OCI-LY7 (cell line): ENCODE measurements at regions of chr20 and their contacts with region 1.

Region 1: GRCh38 chr20:47508278-47508677 is 6.6 kb downstream of the NCOA3 start:
- DNase-seq: peak; percentile 42
- H3K4me3 ChIP-seq: peak overlapping the region; percentile 27
- H3K27ac ChIP-seq: peak overlapping the region; percentile 54
- H3K4me1 ChIP-seq: peaks cover 65% of the 10 kb centered on the region
- CTCF ChIP-seq: no peak

Region 2: DNA sequence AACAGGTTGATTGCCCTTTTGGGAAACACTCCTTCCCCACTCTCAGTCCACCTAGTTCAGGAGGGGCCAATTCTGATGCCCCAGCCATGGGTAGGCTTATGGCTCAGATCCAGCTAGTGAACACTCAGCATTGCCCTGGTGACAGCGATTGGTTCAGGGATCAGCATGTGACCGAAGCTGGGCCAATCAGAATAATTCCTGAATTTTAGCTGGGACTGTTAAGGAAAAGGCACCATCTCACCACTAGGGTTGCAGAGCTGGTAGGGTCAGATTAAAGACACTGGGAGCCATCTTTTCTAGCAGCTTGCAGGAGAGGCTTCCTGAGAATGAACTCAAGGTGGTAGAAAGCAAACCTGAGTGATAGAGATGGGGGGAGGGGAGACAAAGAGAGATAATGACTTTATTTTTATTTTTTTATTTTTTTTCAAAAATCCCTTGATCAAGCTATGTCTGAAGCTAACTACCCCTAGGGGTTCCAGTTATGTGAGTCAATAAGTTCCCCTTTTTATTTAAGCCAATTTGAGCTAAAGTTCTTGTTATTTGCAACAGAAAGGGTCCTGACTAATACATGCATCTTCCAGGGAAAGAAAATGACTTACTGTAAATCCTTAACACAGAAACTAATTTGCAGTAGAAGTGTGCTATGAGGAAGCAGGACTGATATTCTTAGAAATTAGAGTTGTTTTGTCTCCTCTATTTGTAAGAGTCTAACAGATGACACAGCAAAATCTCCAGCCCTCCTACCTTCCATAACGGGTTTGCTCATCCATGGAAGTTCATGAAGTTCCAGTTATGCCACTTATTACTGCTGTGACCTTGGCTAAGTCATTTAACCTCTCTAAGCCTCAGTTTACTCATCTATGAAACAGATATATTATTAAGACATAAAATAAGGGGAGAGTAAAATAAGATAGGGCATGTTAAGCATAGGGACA is 569.0 kb before region 1 on chr20:
- CTCF ChIA-PET with region 1: no interaction called
- POLR2A ChIA-PET with region 1: no interaction called
- intact Hi-C with region 1: no loop called
- DNase-seq: peak; percentile 37
- H3K4me3 ChIP-seq: no peak overlapping the region
- H3K27ac ChIP-seq: no peak overlapping the region
- H3K4me1 ChIP-seq: no peaks in the 10 kb centered on the region
- CTCF ChIP-seq: peak; percentile 58

Region 3: GRCh38 chr20:47561180-47561579 is 52.9 kb after region 1 on chr20:
- CTCF ChIA-PET with region 1: no interaction called
- POLR2A ChIA-PET with region 1: interaction called, 6 read pairs
- intact Hi-C with region 1: loop called (anchors 5 kb)
- DNase-seq: no peak
- H3K4me3 ChIP-seq: peak overlapping the region; percentile 21
- H3K27ac ChIP-seq: peak overlapping the region; percentile 27
- H3K4me1 ChIP-seq: peaks cover 92% of the 10 kb centered on the region
- CTCF ChIP-seq: no peak